AG04449 (cell line): ENCODE measurements at regions of chr7 and their contacts with region 1.

Region 1: DNA sequence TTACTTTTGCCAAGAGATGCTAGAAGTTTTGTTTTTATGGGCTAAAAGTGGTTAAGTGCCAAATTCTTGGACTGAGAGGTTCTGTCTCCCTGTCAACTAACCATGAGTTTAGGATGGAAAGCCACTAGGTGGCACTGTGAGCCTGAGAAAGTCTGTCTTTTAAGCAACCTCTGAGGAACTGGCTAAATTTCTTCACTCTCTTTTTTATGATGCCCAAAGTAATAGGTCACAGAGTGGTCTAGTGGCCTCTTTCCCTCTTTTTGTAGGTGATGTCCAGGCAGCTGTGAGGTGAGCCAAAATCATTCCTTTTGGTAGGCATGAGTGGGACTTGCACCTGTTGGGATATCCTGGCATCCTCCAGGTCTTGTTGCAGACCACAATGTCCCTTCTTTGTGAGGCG is 56.8 kb downstream of the SND1 start:
- DNase-seq: peak; percentile 53
- H3K4me3 ChIP-seq: no peak overlapping the region
- CTCF ChIP-seq: peak; percentile 69

Region 2: GRCh38 chr7:127588019-127588696 is 120.6 kb before region 1 on chr7 and contains the start of gene ARF5:
- CTCF ChIA-PET with region 1: interaction called, 15 read pairs
- POLR2A ChIA-PET with region 1: interaction called, 5 read pairs
- DNase-seq: no peak
- H3K4me3 ChIP-seq: peak within 1 kb of the TSS; percentile 94
- CTCF ChIP-seq: no peak

Region 3: DNA sequence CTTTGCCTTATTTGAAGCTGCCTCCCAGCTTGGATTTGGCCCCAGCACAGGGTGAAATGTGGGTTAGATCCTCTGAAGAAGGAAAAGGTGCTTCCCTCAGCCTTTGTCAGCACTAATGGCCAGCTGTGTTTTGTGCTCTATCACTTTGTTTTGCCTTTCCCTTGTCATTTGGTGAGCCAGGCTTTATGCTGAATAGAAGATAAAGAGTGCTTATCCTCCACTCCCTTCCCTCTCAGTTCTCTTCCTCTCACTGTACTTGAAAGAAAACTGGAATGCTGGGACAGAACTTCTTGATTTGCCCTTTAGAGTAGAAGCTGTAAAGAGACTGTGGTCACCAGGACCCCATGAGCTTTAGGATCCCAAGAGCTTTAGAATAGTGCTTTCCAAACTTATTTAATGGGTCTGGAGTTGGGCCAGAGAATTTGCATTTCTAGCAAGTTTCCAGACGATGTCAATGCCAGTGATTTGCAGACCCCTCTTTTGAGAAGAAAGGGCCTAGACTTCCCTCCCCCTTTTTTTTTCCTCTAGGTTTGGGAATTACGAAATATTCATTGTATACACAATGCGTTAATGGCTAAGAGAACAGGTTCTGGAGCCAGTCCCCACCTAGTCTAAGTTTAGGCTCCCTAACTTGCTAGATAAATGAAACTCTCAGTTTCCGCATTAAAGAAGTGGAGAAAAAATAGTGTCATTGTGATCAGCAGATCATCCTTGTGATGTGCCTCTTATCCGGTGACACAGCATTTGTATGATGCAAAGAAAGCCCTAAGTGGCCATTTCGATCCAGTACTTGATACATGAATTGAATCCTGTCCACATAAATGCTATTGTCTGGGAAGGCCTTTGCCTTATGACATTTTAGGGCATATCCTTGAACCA is 241.2 kb after region 1 on chr7:
- CTCF ChIA-PET with region 1: interaction called, 11 read pairs
- POLR2A ChIA-PET with region 1: no interaction called
- DNase-seq: no peak
- H3K4me3 ChIP-seq: no peak overlapping the region
- CTCF ChIP-seq: no peak

Region 4: GRCh38 chr7:128067983-128068382 is 359.2 kb after region 1 on chr7:
- CTCF ChIA-PET with region 1: interaction called, 11 read pairs
- POLR2A ChIA-PET with region 1: no interaction called
- DNase-seq: peak; percentile 19
- H3K4me3 ChIP-seq: no peak overlapping the region
- CTCF ChIP-seq: no peak

Region 5: GRCh38 chr7:128104035-128104742 is 395.4 kb after region 1 on chr7:
- CTCF ChIA-PET with region 1: interaction called, 13 read pairs
- POLR2A ChIA-PET with region 1: no interaction called
- DNase-seq: no peak
- H3K4me3 ChIP-seq: peak overlapping the region; percentile 49
- CTCF ChIP-seq: no peak